CD4-positive, alpha-beta memory T cell (primary cell): ENCODE measurements at regions of chr20 and their contacts with region 1.

Region 1: DNA sequence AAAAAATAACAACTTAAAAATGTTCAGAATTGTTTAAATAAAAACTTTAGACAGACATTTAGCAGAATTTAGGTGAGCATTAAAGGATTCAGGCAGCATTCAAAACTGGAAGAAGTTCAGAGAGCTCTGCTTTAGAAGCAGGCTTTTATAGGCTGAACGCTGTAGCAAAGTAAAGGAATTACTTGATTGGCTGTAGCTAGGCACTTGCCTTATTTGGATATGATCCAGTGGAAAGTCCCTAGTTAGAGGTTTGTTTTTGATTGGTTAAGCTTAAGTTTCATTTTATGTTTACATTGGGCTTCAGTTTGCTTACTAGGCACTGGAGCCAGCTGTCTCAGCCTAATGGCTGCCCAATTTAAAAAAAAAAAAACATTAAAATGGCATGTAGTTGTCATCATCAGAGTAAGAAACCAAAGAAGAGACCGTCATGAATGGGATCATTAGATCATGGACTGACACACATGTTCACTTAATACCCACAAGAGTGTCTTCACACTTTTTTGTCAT is 65.1 kb downstream of the CBFA2T2 start:
- DNase-seq: peak; percentile 77 to 94 (median 91)
- H3K4me3 ChIP-seq: no peak overlapping the region
- H3K4me3 Mint-ChIP-seq: peak overlapping the region; percentile 57 to 82 (median 71)
- H3K27ac ChIP-seq: peak overlapping the region; percentile 76
- H3K27ac Mint-ChIP-seq: peak overlapping the region; percentile 91 to 99 (median 97)
- H3K4me1 ChIP-seq: peaks cover 20% of the 10 kb centered on the region
- H3K4me1 Mint-ChIP-seq: peaks cover 14 to 41% (median 24%) of the 10 kb centered on the region in 4 donors
- H3K27me3 ChIP-seq: no peaks in the 10 kb centered on the region
- H3K27me3 Mint-ChIP-seq: no peaks in the 10 kb centered on the region

Region 2: DNA sequence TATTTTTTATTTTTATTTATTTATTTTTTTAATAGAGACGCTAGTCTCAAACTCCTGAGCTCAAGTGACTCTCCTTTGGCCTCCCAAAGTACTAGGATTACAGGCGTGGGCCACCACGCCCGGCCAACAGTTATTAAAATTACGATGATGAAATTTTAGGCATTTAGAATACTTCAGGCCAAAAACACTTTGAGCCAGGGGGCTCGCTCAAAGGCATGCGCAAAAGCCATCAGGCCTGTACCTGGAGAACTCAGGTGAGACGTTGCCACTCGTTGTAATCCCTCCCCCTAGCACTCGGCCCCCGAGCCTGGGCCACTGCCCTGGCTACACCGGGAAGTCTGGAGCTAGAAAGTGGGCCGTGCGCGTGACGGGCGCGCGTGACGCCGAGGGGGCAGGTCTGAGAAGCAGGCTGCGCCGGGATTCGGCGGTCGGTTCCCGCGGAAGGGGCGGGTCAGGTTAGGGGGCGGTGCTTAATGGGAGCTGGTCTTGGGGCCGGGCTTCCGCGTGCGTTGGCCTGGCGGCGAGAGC is 65.4 kb before region 1 on chr20:
- CTCF ChIA-PET with region 1: interaction called, 4 read pairs
- POLR2A ChIA-PET with region 1: interaction called, 24 read pairs
- intact Hi-C with region 1: loop called (anchors 1 kb)
- DNase-seq: peak; percentile 98 to 99 (median 99)
- H3K4me3 ChIP-seq: peak overlapping the region; percentile 61 to 70
- H3K4me3 Mint-ChIP-seq: peak overlapping the region; percentile 81 to 96 (median 86)
- H3K27ac ChIP-seq: peak overlapping the region; percentile 89
- H3K27ac Mint-ChIP-seq: peak overlapping the region; percentile 92 to 95 (median 94)
- H3K4me1 ChIP-seq: peaks cover 16% of the 10 kb centered on the region
- H3K4me1 Mint-ChIP-seq: peaks cover 8 to 24% (median 18%) of the 10 kb centered on the region in 4 donors
- H3K27me3 ChIP-seq: no peaks in the 10 kb centered on the region
- H3K27me3 Mint-ChIP-seq: no peaks in the 10 kb centered on the region

Region 3: DNA sequence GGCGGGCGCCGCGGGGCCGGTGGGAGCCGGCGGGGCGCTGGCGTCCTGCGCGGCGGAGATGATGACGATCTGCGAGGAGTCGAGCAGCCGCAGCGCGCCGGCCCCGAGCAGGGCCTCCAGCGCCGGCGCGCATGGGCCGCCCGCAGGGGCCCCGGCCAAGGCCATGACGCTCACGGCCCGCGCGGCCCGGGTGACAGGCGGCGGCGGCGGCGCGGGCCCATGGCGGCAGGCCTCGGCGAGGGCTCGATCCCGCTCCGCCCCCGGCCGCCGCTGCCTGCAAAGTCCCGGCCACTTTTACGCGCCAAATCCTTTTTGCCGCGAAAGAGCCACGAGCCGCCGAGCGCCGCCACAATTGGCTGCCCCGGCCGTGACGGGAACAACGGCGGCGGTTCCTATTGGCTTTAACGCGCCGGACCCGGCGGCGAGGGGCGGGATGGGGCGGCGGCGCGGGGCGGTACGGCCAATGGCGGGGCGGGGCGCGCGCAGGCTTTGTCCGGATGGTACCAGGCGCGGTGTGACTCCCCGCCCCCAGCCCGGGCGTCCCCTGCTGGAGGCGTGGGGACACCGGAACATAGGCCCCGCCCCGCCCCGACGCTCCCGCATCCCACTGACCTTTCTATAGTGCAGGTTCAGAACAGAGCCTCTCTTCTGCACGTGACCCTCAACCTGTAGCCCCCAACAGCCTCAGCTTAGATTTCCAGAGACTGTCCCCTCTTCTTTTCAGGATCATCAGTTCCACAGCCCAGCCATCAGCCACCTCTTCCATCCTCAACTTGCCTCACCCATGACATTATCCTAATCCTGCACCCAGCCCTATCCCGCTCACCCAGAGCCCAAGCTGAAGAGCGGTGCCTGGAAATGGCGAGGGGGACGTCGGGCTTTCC is 131.4 kb after region 1 on chr20 and contains the start of gene E2F1:
- CTCF ChIA-PET with region 1: no interaction called
- POLR2A ChIA-PET with region 1: no interaction called
- intact Hi-C with region 1: loop called (anchors 1 kb)
- DNase-seq: peak; percentile 91 to 95 (median 93)
- H3K4me3 ChIP-seq: peak within 1 kb of the TSS in 1 of 2 donors; percentile 38
- H3K4me3 Mint-ChIP-seq: peak within 1 kb of the TSS; percentile 82 to 89 (median 86)
- H3K27ac ChIP-seq: peak within 1 kb of the TSS; percentile 54
- H3K27ac Mint-ChIP-seq: peak within 1 kb of the TSS; percentile 84 to 94 (median 91)
- H3K4me1 ChIP-seq: peaks cover 40% of the 10 kb centered on the region
- H3K4me1 Mint-ChIP-seq: peaks cover 26 to 62% (median 43%) of the 10 kb centered on the region in 4 donors
- H3K27me3 ChIP-seq: no peaks in the 10 kb centered on the region
- H3K27me3 Mint-ChIP-seq: no peaks in the 10 kb centered on the region
- total RNA-seq, gene E2F1: 2.2 to 2.6 TPM